ENCODE measurements at regions of chr4 and their contacts with region 1.

Region 1: DNA sequence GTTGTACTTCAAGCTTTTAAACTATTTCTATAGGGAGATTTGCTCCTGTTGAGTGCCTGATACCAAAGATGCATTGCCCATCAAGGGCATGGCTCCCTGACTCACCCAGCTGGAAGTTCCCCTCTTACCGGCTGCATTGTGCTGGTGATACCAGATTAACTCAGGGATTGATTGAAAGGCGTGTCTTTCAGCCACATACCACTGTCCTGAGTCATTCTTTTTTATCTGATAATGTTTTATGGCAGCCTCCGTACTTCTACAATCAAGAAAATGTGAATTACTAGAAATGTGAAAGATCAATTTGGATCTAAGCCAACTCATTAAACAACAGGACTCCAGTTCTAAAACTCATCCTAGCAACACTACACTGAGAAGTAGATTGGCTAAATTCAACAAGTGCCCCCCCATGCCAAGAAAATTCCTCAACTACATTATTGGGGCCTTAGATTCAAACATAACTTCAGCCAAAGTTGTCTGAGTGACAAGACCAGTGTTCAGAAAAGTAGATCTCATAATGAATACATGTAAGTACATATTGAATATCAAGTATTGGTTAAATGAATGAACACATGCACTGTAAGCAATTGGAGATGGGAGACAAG is 40.0 kb downstream of the TXK start:
- DNase-seq: no peak
- CTCF ChIP-seq: no peak

Region 2: GRCh38 chr4:47686294-47686872 is 407.7 kb before region 1 on chr4:
- in situ Hi-C with region 1: loop called (anchors 25 kb)
- DNase-seq: peak; percentile 51
- CTCF ChIP-seq: peak; percentile 73

Region 3: GRCh38 chr4:47926639-47927258 is 167.3 kb before region 1 on chr4:
- in situ Hi-C with region 1: loop called (anchors 25 kb)
- DNase-seq: peak; percentile 50
- CTCF ChIP-seq: peak; percentile 78

Region 4: DNA sequence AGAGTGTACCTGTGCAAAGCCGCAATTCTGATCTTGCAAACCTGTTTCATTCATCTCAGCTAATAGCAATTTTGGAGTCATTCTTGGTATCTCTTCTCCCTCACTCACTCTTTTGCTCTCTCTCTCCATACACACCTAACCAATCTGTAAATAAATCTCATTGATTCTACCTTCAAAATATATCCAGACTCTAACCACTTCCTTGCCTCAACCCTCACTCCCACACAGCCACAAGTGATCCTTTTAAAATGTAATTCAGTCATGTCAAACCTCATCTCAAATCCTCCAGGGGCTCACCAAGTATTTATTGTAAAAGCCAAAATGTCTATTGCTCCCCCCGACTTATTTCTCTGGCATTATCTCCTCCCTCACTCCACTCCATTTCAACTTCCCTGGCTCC is 337.4 kb after region 1 on chr4:
- in situ Hi-C with region 1: no loop called
- DNase-seq: no peak
- CTCF ChIP-seq: no peak